ENCODE measurements at regions of chr6 and their contacts with region 1.

Region 1: GRCh38 chr6:75601304-75602245 is at the start of gene SENP6:
- DNase-seq: peak; percentile 72
- ATAC-seq: peak; percentile 66
- H3K4me3 Mint-ChIP-seq: peak within 1 kb of the TSS; percentile 91
- H3K27ac Mint-ChIP-seq: peak within 1 kb of the TSS; percentile 97
- H3K4me1 Mint-ChIP-seq: peaks cover 55% of the 10 kb centered on the region
- H3K27me3 Mint-ChIP-seq: no peaks in the 10 kb centered on the region
- CTCF ChIP-seq: no peak
- total RNA-seq, gene SENP6: 70.2 to 72.0 TPM

Region 2: GRCh38 chr6:75546381-75546780 is 55.2 kb before region 1 on chr6:
- CTCF ChIA-PET with region 1: no interaction called
- POLR2A ChIA-PET with region 1: no interaction called
- intact Hi-C with region 1: no loop called
- DNase-seq: no peak
- ATAC-seq: no peak
- H3K4me3 Mint-ChIP-seq: no peak overlapping the region
- H3K27ac Mint-ChIP-seq: no peak overlapping the region
- H3K4me1 Mint-ChIP-seq: peaks cover under 1% of the 10 kb centered on the region
- H3K27me3 Mint-ChIP-seq: peaks cover 4% of the 10 kb centered on the region
- CTCF ChIP-seq: no peak

Region 3: GRCh38 chr6:75611702-75612375 is 10.3 kb after region 1 on chr6:
- CTCF ChIA-PET with region 1: interaction called, 5 read pairs
- POLR2A ChIA-PET with region 1: interaction called, 28 read pairs
- intact Hi-C with region 1: no loop called
- DNase-seq: peak; percentile 84
- ATAC-seq: peak; percentile 85
- H3K4me3 Mint-ChIP-seq: peak overlapping the region; percentile 26
- H3K27ac Mint-ChIP-seq: peak overlapping the region; percentile 62
- H3K4me1 Mint-ChIP-seq: peaks cover 80% of the 10 kb centered on the region
- H3K27me3 Mint-ChIP-seq: no peaks in the 10 kb centered on the region
- CTCF ChIP-seq: no peak

Region 4: GRCh38 chr6:75633045-75633444 is 31.5 kb after region 1 on chr6:
- CTCF ChIA-PET with region 1: no interaction called
- POLR2A ChIA-PET with region 1: no interaction called
- intact Hi-C with region 1: no loop called
- DNase-seq: no peak
- ATAC-seq: no peak
- H3K4me3 Mint-ChIP-seq: no peak overlapping the region
- H3K27ac Mint-ChIP-seq: no peak overlapping the region
- H3K4me1 Mint-ChIP-seq: peaks cover 17% of the 10 kb centered on the region
- H3K27me3 Mint-ChIP-seq: no peaks in the 10 kb centered on the region
- CTCF ChIP-seq: no peak

Measured in activated CD8-positive, alpha-beta T cell treated with anti-CD3 and anti-CD28 coated beads for 36 hours (primary cell).